GM12878 (cell line): ENCODE measurements at regions of chr12 and their contacts with region 1.

Region 1: GRCh38 chr12:54005853-54006686 is 2.7 kb upstream of the HOXC8 start:
- DNase-seq: no peak
- ATAC-seq: peak; percentile 91
- H3K4me3 ChIP-seq: peak overlapping the region; percentile 54; the same call in 1 of the 2 replicates
- H3K27ac ChIP-seq: no peak overlapping the region
- H3K4me1 ChIP-seq: peaks cover 6% of the 10 kb centered on the region
- H3K27me3 ChIP-seq: peaks cover 33 to 34% of the 10 kb centered on the region in 2 experiments
- CTCF ChIP-seq: peak; percentile 74 to 93 (median 84)
- EP300 ChIP-seq: 0 out of 4 replicates have a peak, but pooled peaks of 1 of the 2 experiments have one; percentile 15
- POLR2A ChIP-seq: no peak
- RAD21 ChIP-seq: peak; percentile 91

Region 2: GRCh38 chr12:53696285-53696654 is 309.8 kb before region 1 on chr12:
- CTCF ChIA-PET with region 1: no interaction called
- POLR2A ChIA-PET with region 1: no interaction called
- RAD21 ChIA-PET with region 1: no interaction called
- SMC1A ChIA-PET with region 1: no interaction called
- in situ Hi-C with region 1: no loop called
- intact Hi-C with region 1: no loop called
- DNase-seq: peak; percentile 25
- ATAC-seq: peak; percentile 84
- H3K4me3 ChIP-seq: 0 out of 2 replicates have a peak overlapping the region, but pooled peaks have one; percentile 1
- H3K27ac ChIP-seq: no peak overlapping the region
- H3K4me1 ChIP-seq: peaks cover 5% of the 10 kb centered on the region; the same call in 1 of the 2 replicates
- H3K27me3 ChIP-seq: peaks cover 16 to 43% of the 10 kb centered on the region in 2 experiments
- CTCF ChIP-seq: no peak
- EP300 ChIP-seq: no peak
- POLR2A ChIP-seq: no peak
- RAD21 ChIP-seq: no peak

Region 3: DNA sequence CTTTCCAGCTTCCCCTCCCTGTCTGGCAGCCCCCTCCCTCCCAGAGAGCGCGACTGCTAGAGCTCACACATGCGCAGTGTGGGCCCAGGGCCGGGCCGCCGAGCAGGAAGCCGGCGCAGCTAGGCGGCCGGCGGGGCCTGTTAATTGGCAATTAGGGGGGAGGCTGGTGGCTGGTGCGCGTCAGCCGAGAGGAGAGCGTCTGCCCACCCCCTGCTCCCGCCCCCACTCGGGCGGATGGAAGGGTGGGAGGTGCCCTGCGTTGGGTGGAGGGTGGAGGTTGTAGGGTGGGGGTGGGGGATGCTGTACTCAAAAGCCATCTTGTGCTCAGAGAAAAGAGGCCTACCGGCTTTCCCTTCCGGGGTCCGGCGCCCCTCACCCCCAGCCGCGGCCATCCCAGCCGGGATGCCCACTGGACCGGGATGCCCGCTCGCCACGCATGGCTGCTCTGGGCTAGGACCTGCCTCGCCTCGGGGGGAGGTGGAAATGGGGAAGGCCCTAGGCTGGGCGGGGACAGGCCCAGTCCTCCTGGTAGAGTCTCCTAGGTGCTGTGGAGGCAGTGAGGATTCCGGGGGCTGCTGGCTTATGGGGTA is 11.9 kb after region 1 on chr12:
- CTCF ChIA-PET with region 1: interaction called, 27 read pairs
- POLR2A ChIA-PET with region 1: interaction called, 9 read pairs
- RAD21 ChIA-PET with region 1: interaction called, 17 read pairs
- SMC1A ChIA-PET with region 1: interaction called, 10 read pairs
- in situ Hi-C with region 1: no loop called
- intact Hi-C with region 1: loop called (anchors 1 kb)
- DNase-seq: peak; percentile 79
- ATAC-seq: peak; percentile 92
- H3K4me3 ChIP-seq: peak overlapping the region; percentile 88
- H3K27ac ChIP-seq: peak overlapping the region; percentile 80
- H3K4me1 ChIP-seq: peaks cover 21% of the 10 kb centered on the region
- H3K27me3 ChIP-seq: peaks cover 8 to 26% of the 10 kb centered on the region in 2 experiments
- CTCF ChIP-seq: no peak
- EP300 ChIP-seq: peak; percentile 36 to 45; a peak in 1 of 4 replicates
- POLR2A ChIP-seq: peak; percentile 79
- RAD21 ChIP-seq: no peak

Region 4: DNA sequence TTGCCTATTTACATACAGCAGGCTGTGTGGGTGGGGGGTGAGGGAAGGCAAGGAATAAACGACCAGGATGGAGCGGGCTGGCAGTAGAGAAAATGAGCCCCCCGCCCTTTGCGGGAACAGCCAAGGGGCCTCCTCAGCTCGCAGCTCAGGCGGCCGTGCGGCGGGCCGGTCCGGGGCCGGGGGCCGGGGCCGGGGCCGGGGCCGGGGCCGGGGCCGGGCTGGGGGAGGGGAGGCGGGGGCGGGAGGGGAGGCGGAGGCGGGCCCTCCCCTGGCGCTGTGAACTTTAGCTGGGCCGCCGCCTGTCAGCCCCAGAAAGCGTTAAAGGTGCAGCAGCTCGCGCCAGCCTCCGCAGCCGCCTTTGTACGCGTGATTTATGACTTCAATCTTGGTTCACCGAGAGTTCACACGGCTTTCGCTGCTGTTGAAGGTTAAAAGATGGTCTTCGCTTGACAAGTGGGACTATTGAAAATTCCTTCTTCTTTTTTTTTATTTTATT is 76.4 kb after region 1 on chr12:
- CTCF ChIA-PET with region 1: no interaction called
- POLR2A ChIA-PET with region 1: no interaction called
- RAD21 ChIA-PET with region 1: no interaction called
- SMC1A ChIA-PET with region 1: no interaction called
- in situ Hi-C with region 1: no loop called
- intact Hi-C with region 1: no loop called
- DNase-seq: no peak
- ATAC-seq: no peak
- H3K4me3 ChIP-seq: peak overlapping the region; percentile 70
- H3K27ac ChIP-seq: peak overlapping the region; percentile 35
- H3K4me1 ChIP-seq: no peaks in the 10 kb centered on the region
- H3K27me3 ChIP-seq: no peaks in the 10 kb centered on the region
- CTCF ChIP-seq: no peak
- EP300 ChIP-seq: no peak
- POLR2A ChIP-seq: 0 out of 2 replicates have a peak, but pooled peaks have one; percentile 26
- RAD21 ChIP-seq: no peak

Region 5: DNA sequence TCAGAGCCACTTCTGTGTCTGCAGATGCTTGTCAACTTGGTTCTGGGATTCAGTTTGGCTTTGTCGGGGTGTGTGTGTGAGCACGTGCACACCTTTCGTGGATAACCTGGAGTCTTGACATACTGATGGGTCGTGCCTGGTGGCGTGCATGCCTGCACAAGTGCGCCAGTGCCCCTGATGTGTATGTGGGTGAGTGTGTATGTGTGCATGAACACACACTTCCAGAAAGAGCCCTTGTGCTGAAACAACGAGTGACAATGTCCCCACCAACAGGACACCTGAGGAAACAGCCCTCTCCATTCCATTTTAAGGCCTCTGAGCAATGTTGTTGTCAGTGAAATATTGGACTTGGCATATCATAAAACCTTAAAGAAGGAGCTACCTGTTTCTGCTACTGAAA is 128.8 kb after region 1 on chr12:
- CTCF ChIA-PET with region 1: interaction called, 24 read pairs
- POLR2A ChIA-PET with region 1: no interaction called
- RAD21 ChIA-PET with region 1: interaction called, 12 read pairs
- SMC1A ChIA-PET with region 1: interaction called, 11 read pairs
- in situ Hi-C with region 1: no loop called
- intact Hi-C with region 1: no loop called
- DNase-seq: no peak
- ATAC-seq: peak; percentile 49; the same call in 2 of the 3 replicates
- H3K4me3 ChIP-seq: no peak overlapping the region
- H3K27ac ChIP-seq: no peak overlapping the region
- H3K4me1 ChIP-seq: no peaks in the 10 kb centered on the region
- H3K27me3 ChIP-seq: peaks cover 2 to 10% of the 10 kb centered on the region in 2 experiments; a peak in 3 of 4 replicates
- CTCF ChIP-seq: peak; percentile 22 to 38 (median 34); a peak in 4 of 6 replicates
- EP300 ChIP-seq: no peak
- POLR2A ChIP-seq: no peak
- RAD21 ChIP-seq: peak; percentile 42

Region 6: DNA sequence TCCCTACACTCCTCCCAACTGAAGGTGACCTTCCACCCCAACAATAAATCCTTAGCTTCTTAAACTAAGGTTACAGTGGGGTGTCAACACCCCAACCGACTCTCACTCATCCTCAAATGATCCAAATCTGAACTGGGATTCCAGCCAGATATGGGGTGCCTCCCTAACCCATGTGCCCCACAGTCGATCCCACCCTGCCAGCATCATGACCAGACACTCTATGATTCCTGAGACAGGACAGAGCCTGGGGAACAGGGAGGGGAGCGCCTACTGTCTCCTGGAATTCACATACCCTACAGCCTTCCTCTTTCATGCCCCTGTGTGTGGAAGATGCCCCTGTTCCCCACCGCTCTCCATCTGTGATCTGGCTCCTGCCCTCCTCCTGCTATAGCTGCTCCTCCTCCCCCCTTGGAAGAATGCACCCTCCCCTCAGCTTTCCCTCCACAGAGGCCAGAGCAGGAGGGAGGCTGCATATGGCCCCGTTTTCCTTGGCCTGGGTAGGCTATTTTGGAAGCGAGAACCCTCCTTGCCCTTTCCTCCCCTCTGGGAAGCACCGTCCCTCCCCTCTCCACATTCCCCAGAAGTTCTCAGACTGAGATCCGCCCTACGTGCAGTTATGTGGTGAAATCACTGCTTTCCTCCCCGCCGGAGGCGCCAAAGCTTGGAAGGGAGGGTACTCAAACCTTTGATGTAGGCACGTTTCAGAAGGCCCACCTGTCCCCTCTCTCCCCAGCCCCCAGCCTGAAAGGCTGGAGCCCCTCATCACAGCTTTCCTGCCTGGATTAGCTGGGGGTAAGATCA is 134.7 kb after region 1 on chr12:
- CTCF ChIA-PET with region 1: interaction called, 24 read pairs
- POLR2A ChIA-PET with region 1: no interaction called
- RAD21 ChIA-PET with region 1: interaction called, 12 read pairs
- SMC1A ChIA-PET with region 1: interaction called, 11 read pairs
- in situ Hi-C with region 1: no loop called
- intact Hi-C with region 1: no loop called
- DNase-seq: no peak
- ATAC-seq: no peak
- H3K4me3 ChIP-seq: no peak overlapping the region
- H3K27ac ChIP-seq: no peak overlapping the region
- H3K4me1 ChIP-seq: no peaks in the 10 kb centered on the region
- H3K27me3 ChIP-seq: peaks cover 5 to 7% of the 10 kb centered on the region in 2 experiments
- CTCF ChIP-seq: no peak
- EP300 ChIP-seq: no peak
- POLR2A ChIP-seq: no peak
- RAD21 ChIP-seq: no peak

Region 7: GRCh38 chr12:54201001-54201794 is 195.1 kb after region 1 on chr12:
- CTCF ChIA-PET with region 1: interaction called, 74 read pairs
- POLR2A ChIA-PET with region 1: no interaction called
- RAD21 ChIA-PET with region 1: interaction called, 38 read pairs
- SMC1A ChIA-PET with region 1: interaction called, 8 read pairs
- in situ Hi-C with region 1: no loop called
- intact Hi-C with region 1: loop called (anchors 1 kb)
- DNase-seq: no peak
- ATAC-seq: peak; percentile 97
- H3K4me3 ChIP-seq: no peak overlapping the region
- H3K27ac ChIP-seq: no peak overlapping the region
- H3K4me1 ChIP-seq: peaks cover 15% of the 10 kb centered on the region
- H3K27me3 ChIP-seq: peaks cover 0 to 2% of the 10 kb centered on the region in 2 experiments; a peak in 3 of 4 replicates
- CTCF ChIP-seq: peak; percentile 93 to 98 (median 96)
- EP300 ChIP-seq: no peak
- POLR2A ChIP-seq: no peak
- RAD21 ChIP-seq: peak; percentile 68

Region 8: GRCh38 chr12:54207484-54208294 is 201.6 kb after region 1 on chr12:
- CTCF ChIA-PET with region 1: interaction called, 74 read pairs
- POLR2A ChIA-PET with region 1: interaction called, 4 read pairs
- RAD21 ChIA-PET with region 1: interaction called, 38 read pairs
- SMC1A ChIA-PET with region 1: interaction called, 8 read pairs
- in situ Hi-C with region 1: no loop called
- intact Hi-C with region 1: loop called (anchors 1 kb)
- DNase-seq: no peak
- ATAC-seq: peak; percentile 98
- H3K4me3 ChIP-seq: no peak overlapping the region
- H3K27ac ChIP-seq: no peak overlapping the region
- H3K4me1 ChIP-seq: no peaks in the 10 kb centered on the region
- H3K27me3 ChIP-seq: peaks cover 0 to 2% of the 10 kb centered on the region in 2 experiments; a peak in 3 of 4 replicates
- CTCF ChIP-seq: peak; percentile 93 to 97 (median 97)
- EP300 ChIP-seq: no peak
- POLR2A ChIP-seq: no peak
- RAD21 ChIP-seq: peak; percentile 87

Region 9: DNA sequence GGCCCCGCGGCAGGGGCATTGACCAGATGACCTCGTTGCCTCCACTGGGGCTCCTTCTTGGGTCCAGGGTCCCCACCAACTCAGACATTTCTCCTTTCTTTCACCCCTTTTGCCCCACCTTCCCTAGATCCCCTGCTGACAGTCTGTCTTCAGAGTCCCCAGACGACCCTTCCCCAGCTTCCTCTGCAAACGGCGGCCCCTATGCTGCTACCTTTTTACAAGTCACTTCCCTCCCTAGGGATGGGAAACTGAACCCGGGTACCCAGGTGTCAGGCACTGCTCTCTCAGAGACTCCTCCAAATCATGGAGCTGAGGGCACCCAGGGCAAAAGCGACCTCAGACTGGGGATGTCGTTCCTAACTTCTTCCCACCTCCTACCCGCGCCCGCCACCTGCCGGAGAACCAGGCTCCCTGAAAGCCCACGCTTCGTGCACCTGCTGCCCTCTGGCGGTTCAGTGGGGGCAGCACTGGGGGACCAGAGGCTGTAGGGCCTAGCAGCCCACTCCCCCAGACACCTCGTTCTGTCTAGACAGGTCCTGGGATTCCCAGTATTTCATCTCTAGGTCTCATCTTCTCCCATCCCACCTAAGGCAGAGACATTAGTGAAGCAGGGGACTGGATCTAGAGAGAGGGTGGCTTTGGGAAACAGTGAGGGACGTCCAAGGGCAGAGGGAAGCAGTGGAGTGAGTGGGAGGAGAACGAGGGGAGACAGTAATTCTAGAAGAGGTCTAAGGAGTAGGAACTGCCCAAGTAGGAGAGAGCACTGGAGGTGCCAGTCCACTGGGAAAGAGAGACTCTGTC is 373.5 kb after region 1 on chr12:
- CTCF ChIA-PET with region 1: interaction called, 3 read pairs
- POLR2A ChIA-PET with region 1: no interaction called
- RAD21 ChIA-PET with region 1: no interaction called
- SMC1A ChIA-PET with region 1: no interaction called
- in situ Hi-C with region 1: no loop called
- intact Hi-C with region 1: loop called (anchors 10 kb)
- DNase-seq: no peak
- ATAC-seq: peak; percentile 95
- H3K4me3 ChIP-seq: no peak overlapping the region
- H3K27ac ChIP-seq: no peak overlapping the region
- H3K4me1 ChIP-seq: peaks cover 4% of the 10 kb centered on the region
- H3K27me3 ChIP-seq: no peaks in the 10 kb centered on the region
- CTCF ChIP-seq: peak; percentile 100; a peak in 5 of 6 replicates
- EP300 ChIP-seq: no peak
- POLR2A ChIP-seq: no peak
- RAD21 ChIP-seq: peak; percentile 73